HCT116 (cell line): ENCODE measurements at regions of chr9 and their contacts with region 1.

Region 1: DNA sequence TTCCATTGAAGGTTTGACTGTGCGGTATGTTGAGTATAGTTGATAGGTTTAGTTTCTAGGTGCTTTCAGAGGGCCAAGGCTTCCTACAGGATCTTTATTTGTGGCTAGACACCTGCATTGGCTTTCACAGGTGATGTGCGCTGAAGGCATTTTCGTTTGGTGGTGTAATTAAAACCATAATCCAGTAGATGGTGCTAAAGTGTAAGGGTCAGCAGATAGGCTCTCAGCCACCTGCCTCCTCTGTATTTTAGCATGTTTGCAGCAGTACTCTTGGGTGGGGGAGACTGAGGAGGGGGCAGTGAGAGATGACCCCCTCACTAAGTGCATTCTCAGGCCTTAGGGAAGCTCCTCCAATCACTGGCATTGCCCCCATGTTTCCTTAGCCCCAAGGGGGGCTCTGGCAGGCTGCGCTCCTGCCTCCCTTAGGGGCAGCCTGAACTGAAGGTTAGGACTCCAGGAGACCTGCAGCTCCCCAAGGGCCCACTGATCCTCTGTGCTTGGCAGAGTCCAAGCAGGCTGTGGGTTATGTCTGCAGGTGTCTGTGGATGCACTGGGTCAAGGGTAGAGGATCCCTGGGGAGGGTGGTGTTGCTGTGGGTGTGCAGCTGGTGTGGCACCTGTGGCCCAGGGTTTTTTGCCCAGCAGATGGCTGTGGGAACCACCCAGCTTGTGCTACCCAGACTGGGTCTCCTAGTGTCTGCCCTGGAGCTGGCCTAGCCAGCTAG is 23.4 kb downstream of the CDK20 start:
- DNase-seq: peak; percentile 28
- ATAC-seq: peak; percentile 86
- H3K4me3 ChIP-seq: no peak overlapping the region
- H3K27ac ChIP-seq: no peak overlapping the region
- H3K4me1 ChIP-seq: no peaks in the 10 kb centered on the region
- H3K27me3 ChIP-seq: no peaks in the 10 kb centered on the region
- CTCF ChIP-seq: peak; percentile 49 to 76 (median 71); a peak in 5 of 6 replicates
- POLR2A ChIP-seq: no peak
- RAD21 ChIP-seq: peak; percentile 91

Region 2: GRCh38 chr9:88041447-88041846 is 90.5 kb after region 1 on chr9:
- CTCF ChIA-PET with region 1: interaction called, 13 read pairs
- POLR2A ChIA-PET with region 1: no interaction called
- RAD21 ChIA-PET with region 1: interaction called in 1 of 2 experiments, 4 read pairs
- intact Hi-C with region 1: loop called (anchors 1 kb)
- DNase-seq: no peak
- ATAC-seq: no peak
- H3K4me3 ChIP-seq: no peak overlapping the region
- H3K27ac ChIP-seq: no peak overlapping the region
- H3K4me1 ChIP-seq: no peaks in the 10 kb centered on the region
- H3K27me3 ChIP-seq: no peaks in the 10 kb centered on the region
- CTCF ChIP-seq: peak; percentile 46 to 52 (median 50); a peak in 4 of 6 replicates
- POLR2A ChIP-seq: no peak
- RAD21 ChIP-seq: peak; percentile 76

Region 3: DNA sequence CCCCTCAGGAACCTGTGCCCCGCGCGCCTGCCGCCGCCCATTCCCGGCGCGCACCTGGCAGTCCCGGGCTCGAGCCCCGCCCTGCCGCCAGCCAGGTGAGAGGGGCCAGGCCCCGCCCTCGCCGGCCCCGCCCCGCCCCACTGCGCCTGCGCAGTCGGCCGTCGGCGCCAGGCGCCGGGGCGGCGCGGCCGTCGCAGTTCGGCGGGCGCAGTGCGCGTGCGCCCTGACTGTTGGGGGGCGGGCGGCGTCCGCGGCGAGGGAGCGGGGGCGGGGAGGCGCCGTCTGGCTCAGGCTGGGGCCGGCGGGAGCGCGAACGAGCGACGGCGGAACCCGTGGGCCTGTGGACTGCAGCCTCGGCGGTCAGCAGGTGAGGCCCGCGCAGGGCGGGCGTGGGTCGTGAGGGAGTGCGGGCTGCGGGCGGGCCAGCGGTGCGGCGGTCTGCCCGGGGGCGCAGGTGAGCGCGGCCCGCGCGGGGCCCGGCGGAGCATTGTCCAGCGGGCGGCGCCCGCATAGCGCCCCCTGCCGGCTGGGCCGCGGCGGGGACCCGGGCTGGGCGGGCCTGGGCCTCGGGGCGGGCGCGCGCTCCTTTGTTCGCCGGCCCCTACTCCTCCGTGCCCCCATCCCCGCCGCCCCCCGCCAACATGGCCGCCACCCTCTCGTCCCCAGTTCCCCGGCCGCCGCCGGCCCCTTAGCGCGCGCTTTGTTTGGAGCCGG is 437.4 kb after region 1 on chr9 and contains the start of gene SPIN1:
- CTCF ChIA-PET with region 1: no interaction called
- POLR2A ChIA-PET with region 1: no interaction called
- RAD21 ChIA-PET with region 1: no interaction called
- intact Hi-C with region 1: loop called (anchors 10 kb)
- DNase-seq: peak; percentile 55
- ATAC-seq: peak; percentile 87
- H3K4me3 ChIP-seq: peak within 1 kb of the TSS; percentile 69 to 93
- H3K27ac ChIP-seq: peak within 1 kb of the TSS; percentile 92
- H3K4me1 ChIP-seq: peaks cover 12 to 24% of the 10 kb centered on the region in 2 experiments
- H3K27me3 ChIP-seq: no peaks in the 10 kb centered on the region
- CTCF ChIP-seq: peak in 2 of 3 experiments; percentile 11 to 32; a peak in 1 of 6 replicates
- POLR2A ChIP-seq: no peak
- RAD21 ChIP-seq: peak; percentile 21; the same call in 1 of the 2 replicates
- total RNA-seq, gene SPIN1: 74.0 TPM

Region 4: DNA sequence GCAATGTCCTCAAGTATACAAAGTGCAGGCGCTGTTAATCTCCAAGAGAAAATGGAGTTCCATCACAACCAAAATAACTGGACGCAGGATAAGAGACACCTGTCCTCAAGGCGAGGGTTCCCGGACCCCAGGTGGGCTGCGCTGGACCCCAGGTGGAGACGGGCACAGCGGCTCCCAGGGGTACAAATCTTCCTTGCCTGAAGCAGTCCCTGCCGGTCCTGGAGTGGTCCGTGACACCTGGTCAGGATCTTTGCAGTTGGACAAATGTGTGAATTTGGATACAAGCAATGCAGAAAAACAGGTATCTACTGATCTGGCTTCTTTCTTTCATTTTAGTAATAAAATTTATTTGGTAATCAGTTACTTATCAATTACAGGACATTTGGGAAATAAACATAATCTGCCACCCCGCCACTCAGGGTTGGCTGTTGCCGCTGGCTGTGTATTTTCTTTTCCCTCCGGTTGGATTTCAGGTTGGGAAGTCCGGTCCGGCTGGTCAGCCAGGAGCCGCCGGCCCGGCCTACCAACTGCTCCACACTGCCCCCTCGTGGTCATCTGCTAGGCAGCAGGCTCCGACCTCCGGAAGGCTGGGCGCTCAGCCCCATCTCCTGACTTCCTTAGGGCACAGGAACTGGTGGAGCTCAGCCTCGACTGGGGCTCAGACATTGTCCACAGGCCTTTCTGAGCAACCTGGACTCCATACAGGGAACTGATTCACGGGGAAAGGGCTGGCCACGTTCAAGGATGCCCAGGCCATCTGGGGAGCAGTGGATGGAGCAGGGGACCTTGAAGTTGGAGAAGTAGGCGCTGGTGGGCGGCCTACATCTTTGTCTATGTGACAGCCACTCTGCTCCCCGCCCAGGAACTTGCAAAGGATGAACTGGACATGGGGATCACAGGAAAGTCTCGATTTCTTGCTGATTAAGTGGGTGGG is 627.5 kb after region 1 on chr9:
- CTCF ChIA-PET with region 1: interaction called, 4 read pairs
- POLR2A ChIA-PET with region 1: no interaction called
- RAD21 ChIA-PET with region 1: no interaction called
- intact Hi-C with region 1: loop called (anchors 2 kb)
- DNase-seq: peak; percentile 53
- ATAC-seq: peak; percentile 99
- H3K4me3 ChIP-seq: no peak overlapping the region
- H3K27ac ChIP-seq: no peak overlapping the region
- H3K4me1 ChIP-seq: peaks cover 2 to 9% of the 10 kb centered on the region in 2 experiments; a peak in 3 of 4 replicates
- H3K27me3 ChIP-seq: no peaks in the 10 kb centered on the region
- CTCF ChIP-seq: peak; percentile 92 to 99 (median 94)
- POLR2A ChIP-seq: no peak
- RAD21 ChIP-seq: peak; percentile 95

Region 5: GRCh38 chr9:88593537-88594185 is 642.7 kb after region 1 on chr9:
- CTCF ChIA-PET with region 1: interaction called, 9 read pairs
- POLR2A ChIA-PET with region 1: no interaction called
- RAD21 ChIA-PET with region 1: no interaction called
- intact Hi-C with region 1: loop called (anchors 5 kb)
- DNase-seq: peak; percentile 34
- ATAC-seq: peak; percentile 81
- H3K4me3 ChIP-seq: no peak overlapping the region
- H3K27ac ChIP-seq: no peak overlapping the region
- H3K4me1 ChIP-seq: no peaks in the 10 kb centered on the region
- H3K27me3 ChIP-seq: no peaks in the 10 kb centered on the region; the same call in 1 of the 2 replicates
- CTCF ChIP-seq: peak; percentile 67 to 82 (median 79)
- POLR2A ChIP-seq: no peak
- RAD21 ChIP-seq: peak; percentile 81

Region 6: GRCh38 chr9:88741335-88741734 is 790.4 kb after region 1 on chr9:
- CTCF ChIA-PET with region 1: no interaction called
- POLR2A ChIA-PET with region 1: no interaction called
- RAD21 ChIA-PET with region 1: no interaction called
- intact Hi-C with region 1: loop called (anchors 2 kb)
- DNase-seq: no peak
- ATAC-seq: peak; percentile 74
- H3K4me3 ChIP-seq: no peak overlapping the region
- H3K27ac ChIP-seq: no peak overlapping the region
- H3K4me1 ChIP-seq: no peaks in the 10 kb centered on the region
- H3K27me3 ChIP-seq: peaks cover 20% of the 10 kb centered on the region; the same call in 1 of the 2 replicates
- CTCF ChIP-seq: peak; percentile 59 to 69 (median 62); a peak in 5 of 6 replicates
- POLR2A ChIP-seq: no peak
- RAD21 ChIP-seq: peak; percentile 70

Region 7: DNA sequence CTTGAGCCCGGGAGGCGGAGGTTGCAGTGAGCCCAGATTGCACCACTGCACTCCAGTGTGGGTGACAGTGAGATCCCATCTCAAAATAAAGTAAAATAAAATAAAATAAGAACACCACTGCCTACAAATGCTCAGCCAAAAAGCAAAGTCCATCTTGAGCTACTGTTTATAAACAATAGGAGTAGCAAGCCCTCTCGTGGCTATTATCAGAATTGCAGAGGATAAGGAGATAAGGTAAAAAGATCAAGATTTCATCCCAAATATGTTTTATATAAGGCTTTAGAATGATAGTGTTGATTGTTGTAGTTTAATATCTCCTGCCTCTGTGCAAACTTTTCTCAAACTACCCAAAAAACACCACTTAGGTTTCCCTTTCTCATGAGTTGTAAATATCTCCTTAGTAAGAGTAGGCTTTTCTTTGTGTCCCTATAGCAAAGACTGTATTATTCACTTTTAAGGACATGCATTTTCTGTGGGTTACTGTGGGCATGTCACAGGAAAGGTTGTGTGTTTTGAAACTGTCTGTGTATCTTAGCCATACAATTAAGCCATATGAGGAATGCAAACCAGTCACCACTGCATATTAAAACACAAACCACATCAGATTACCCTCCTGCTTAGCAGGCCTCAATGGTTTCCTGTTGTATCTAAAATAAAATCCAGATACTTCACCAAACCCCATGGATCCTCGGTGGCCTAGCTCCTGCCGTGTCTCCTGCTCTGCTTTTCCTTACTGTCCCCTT is 1328.2 kb after region 1 on chr9:
- CTCF ChIA-PET with region 1: no interaction called
- POLR2A ChIA-PET with region 1: no interaction called
- RAD21 ChIA-PET with region 1: no interaction called
- intact Hi-C with region 1: loop called (anchors 10 kb)
- DNase-seq: peak; percentile 36
- ATAC-seq: peak; percentile 67
- H3K4me3 ChIP-seq: no peak overlapping the region
- H3K27ac ChIP-seq: no peak overlapping the region
- H3K4me1 ChIP-seq: no peaks in the 10 kb centered on the region
- H3K27me3 ChIP-seq: no peaks in the 10 kb centered on the region
- CTCF ChIP-seq: peak; percentile 50 to 74 (median 67); a peak in 5 of 6 replicates
- POLR2A ChIP-seq: no peak
- RAD21 ChIP-seq: peak; percentile 78